ENCODE measurements at regions of chr2 and their contacts with region 1.

Region 1: DNA sequence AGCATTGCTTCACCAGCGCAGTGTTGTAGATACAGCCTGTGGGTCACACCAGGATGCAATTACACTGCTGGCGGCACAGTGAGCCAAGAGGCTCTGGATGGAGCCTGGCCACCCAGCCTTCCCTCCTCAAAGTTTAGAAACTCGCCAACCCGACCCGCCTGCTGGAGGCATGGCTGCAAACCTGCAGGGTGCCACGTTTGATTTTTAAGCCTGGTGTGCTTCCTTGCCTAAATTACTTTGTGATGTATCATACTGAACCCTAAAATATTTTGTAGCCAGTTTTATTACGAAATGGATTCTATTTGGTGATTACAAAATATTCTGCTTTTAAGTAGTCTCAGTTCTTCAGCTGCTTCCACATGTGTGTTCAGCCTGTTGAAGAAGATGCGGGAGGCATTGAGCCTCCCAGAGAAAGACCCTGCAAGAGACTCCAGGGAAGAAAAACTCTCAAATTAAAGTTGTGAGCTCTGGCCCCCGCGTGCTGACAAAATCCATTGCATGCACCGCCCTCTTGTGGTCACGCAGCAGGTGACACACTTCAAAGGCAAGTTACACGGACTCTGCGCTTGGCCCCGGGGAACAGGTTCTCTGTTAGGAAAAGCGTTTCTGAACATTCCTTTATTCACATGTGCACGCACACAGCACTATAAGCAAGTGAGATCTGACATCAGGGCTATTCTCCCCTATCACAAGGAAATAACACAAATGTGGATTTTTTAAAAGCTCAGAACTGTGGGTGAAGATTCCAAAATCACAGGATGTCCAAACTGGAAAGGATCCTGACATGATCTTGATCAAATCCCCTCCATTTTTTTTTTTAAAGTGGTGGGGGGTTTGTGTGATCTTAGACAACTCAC is 63.0 kb upstream of the TWIST2 start:
- DNase-seq: peak; percentile 79
- H3K4me3 ChIP-seq: peak overlapping the region in 1 of 2 experiments; percentile 6; a peak in 1 of 4 replicates
- H3K27ac ChIP-seq: no peak overlapping the region
- H3K4me1 ChIP-seq: no peaks in the 10 kb centered on the region
- H3K27me3 ChIP-seq: no peaks in the 10 kb centered on the region
- CTCF ChIP-seq: peak; percentile 93
- EP300 ChIP-seq: no peak
- RAD21 ChIP-seq: peak; percentile 90

Region 2: DNA sequence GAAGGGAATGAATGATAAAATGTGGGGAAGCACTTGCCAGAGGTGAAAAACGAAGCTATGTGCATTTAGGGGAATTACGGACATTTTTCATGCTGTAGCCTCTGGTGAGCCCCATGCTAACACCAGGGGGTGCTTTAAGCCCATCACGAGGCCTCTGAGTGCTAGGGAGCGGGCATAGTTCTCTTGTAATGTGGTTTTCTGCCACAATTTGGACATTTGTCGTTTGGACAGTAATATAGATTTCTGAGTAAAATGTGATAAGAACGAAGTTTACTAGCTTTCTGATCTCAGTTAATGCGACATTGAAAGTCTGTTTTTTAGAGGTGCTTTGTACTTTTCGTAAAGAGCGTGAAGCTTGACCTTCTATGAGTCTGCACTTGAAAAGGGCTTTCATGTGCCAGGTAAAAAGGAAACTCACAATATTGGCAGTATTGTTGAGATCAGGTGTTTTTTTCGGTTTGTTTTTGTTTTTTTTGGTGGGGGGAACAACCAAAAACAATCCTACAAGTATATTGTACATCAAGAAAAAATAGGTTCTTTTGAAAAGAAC is 414.0 kb before region 1 on chr2:
- CTCF ChIA-PET with region 1: interaction called, 35 read pairs
- POLR2A ChIA-PET with region 1: no interaction called
- DNase-seq: peak; percentile 73
- H3K4me3 ChIP-seq: no peak overlapping the region
- H3K27ac ChIP-seq: no peak overlapping the region
- H3K4me1 ChIP-seq: peaks cover 0 to 4% of the 10 kb centered on the region in 2 experiments; a peak in 1 of 4 replicates
- H3K27me3 ChIP-seq: no peaks in the 10 kb centered on the region
- CTCF ChIP-seq: peak; percentile 76
- EP300 ChIP-seq: no peak
- RAD21 ChIP-seq: peak; percentile 85

Region 3: DNA sequence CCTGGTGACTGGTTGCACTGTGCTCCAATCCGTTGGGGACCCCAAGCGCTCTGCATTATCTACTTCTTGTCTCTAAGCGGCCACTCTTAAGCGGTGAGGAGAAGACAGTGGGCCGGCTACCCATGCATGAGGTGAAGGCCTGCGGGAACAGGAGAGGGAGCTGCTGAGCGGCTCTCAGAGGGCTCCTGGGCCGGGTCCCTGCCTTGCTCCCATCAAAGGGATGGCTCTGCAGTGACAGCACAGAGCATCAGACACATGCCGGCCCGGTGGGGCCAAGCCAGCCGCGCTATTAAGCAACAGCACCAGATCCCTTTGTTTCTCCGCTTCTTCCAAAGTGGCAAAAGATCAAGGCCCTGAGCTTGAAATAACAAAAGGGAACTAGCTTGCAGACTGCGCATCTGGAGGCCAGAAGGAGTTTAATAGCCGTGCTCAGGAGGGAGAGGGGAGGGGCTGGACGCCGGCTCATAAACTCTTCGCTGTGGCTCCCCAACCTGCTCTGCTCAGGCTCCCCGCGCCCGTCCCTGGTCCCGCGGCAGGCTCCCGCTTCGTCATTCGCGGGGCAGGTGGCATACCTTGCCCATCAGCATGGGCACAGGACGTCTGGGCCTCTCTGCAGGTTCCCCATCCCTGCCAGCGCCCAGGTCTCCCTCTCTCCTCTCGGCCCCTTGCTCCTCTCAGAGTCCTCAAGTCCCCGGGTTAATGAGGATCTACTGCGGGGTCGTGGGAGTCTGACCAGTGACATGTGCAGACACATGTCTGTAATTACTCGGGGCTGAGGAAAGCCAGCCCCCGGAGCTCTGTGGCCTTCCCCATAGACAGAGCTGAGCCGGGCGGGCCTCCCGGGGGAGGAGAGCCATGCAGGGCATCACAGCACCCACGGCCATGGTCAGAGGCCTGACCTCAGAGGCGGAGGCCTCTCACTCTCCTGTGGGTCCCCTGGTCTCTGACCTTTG is 261.5 kb before region 1 on chr2:
- CTCF ChIA-PET with region 1: interaction called, 38 read pairs
- POLR2A ChIA-PET with region 1: no interaction called
- DNase-seq: peak; percentile 87
- H3K4me3 ChIP-seq: no peak overlapping the region
- H3K27ac ChIP-seq: peak overlapping the region in 1 of 2 experiments; percentile 31; a peak in 1 of 4 replicates
- H3K4me1 ChIP-seq: peaks cover 0 to 22% of the 10 kb centered on the region in 2 experiments; a peak in 1 of 4 replicates
- H3K27me3 ChIP-seq: no peaks in the 10 kb centered on the region
- CTCF ChIP-seq: no peak; the same call in 1 of the 2 replicates
- EP300 ChIP-seq: no peak
- RAD21 ChIP-seq: peak; percentile 67

Region 4: DNA sequence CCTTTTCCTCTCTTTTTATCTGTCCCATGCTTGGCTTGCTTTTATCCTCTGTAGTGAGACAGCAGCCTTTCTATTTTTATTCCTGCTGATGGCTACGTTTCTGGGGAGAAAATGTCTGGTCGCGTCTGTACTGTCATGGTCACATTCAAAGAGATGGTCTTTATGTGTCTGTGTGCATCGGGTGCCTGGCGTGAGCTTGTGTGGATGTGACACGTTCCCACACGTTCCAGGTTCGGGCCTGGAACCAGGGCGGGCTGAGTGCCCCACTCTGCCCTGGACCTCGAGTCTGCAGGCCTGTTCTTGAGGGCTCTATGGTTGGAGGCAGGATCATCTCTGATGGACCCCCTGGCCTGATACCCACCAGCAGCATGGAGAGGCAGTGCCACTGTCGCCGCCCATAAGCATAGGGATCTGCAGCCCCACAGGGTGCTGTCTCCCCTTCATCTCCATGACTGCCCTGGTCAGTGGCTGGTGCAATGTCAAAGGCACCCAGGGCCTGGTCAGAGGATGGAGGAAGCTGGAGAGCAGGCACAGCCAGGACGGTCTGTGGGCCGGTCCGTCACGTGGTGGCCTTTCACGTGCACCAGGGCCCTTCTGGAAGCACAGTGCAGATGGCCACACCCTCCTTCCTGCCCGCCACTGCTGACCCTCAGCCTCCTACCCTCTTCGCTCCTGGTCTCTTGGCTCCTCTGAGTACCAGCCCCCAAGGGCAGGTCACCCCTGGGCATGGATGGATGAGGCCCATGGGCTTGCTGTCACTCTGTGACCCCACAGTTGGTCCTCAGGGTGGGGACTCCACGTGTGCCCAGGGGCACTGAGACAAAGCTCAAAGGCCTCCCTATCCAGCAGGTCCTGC is 86.2 kb before region 1 on chr2:
- CTCF ChIA-PET with region 1: no interaction called
- POLR2A ChIA-PET with region 1: no interaction called
- DNase-seq: no peak
- H3K4me3 ChIP-seq: no peak overlapping the region
- H3K27ac ChIP-seq: no peak overlapping the region
- H3K4me1 ChIP-seq: no peaks in the 10 kb centered on the region
- H3K27me3 ChIP-seq: no peaks in the 10 kb centered on the region; the same call in 1 of the 2 replicates
- CTCF ChIP-seq: no peak
- EP300 ChIP-seq: no peak
- RAD21 ChIP-seq: no peak

Region 5: GRCh38 chr2:238771218-238771617 is 13.7 kb before region 1 on chr2:
- CTCF ChIA-PET with region 1: interaction called, 26 read pairs
- POLR2A ChIA-PET with region 1: no interaction called
- DNase-seq: peak; percentile 60
- H3K4me3 ChIP-seq: no peak overlapping the region; a peak in 1 of 4 replicates
- H3K27ac ChIP-seq: no peak overlapping the region
- H3K4me1 ChIP-seq: no peaks in the 10 kb centered on the region
- H3K27me3 ChIP-seq: no peaks in the 10 kb centered on the region
- CTCF ChIP-seq: peak; percentile 22; the same call in 1 of the 2 replicates
- EP300 ChIP-seq: no peak
- RAD21 ChIP-seq: no peak

Region 6: DNA sequence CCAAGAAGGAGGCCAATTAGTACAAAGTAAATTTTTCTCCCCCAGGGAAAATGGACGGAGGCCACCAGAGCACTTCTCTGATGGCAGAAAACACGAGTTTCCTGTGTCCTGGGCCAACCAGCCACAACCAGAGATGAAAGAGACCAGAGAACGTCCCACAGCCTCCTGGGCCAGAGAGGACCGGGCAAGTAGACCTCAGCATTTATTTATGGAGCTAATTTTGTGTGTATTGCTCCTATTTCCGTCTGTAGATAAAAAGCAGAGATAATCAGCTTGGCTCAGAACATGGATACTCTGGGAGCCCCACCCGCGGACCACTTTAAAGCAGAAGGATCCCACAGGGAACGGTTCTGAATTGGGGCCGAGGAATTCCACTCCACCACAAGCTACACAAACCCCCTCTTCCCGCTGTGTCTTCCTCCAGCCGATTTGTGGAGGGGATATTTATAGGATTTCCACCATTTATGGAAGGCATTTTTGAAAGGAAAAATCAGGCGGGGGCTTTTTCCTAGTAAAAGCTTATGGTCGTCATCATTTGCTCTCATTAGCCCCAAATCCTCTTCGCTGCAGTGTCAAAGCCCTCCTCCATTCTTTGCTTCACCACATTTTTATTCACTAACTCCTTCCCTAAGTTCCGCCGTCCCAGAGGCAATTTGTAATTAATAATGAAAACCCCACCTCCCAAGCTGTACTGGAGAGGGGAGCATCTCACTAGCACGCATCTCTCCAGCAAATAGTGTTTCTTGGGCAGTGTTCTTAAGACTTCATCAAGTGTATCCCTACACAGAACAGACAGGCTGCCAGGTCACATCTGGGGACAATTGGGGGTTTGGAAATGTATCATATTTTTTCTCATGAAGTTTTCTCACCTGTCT is 19.3 kb after region 1 on chr2:
- CTCF ChIA-PET with region 1: interaction called, 34 read pairs
- POLR2A ChIA-PET with region 1: no interaction called
- DNase-seq: peak; percentile 29
- H3K4me3 ChIP-seq: no peak overlapping the region
- H3K27ac ChIP-seq: no peak overlapping the region
- H3K4me1 ChIP-seq: peaks cover 0 to 8% of the 10 kb centered on the region in 2 experiments; a peak in 1 of 4 replicates
- H3K27me3 ChIP-seq: no peaks in the 10 kb centered on the region
- CTCF ChIP-seq: no peak
- EP300 ChIP-seq: no peak
- RAD21 ChIP-seq: no peak

Region 7: GRCh38 chr2:239061824-239062570 is 277.1 kb after region 1 on chr2:
- CTCF ChIA-PET with region 1: no interaction called
- POLR2A ChIA-PET with region 1: no interaction called
- DNase-seq: peak; percentile 85
- H3K4me3 ChIP-seq: no peak overlapping the region
- H3K27ac ChIP-seq: peak overlapping the region in 1 of 2 experiments; percentile 71; a peak in 2 of 4 replicates
- H3K4me1 ChIP-seq: peaks cover 0 to 42% of the 10 kb centered on the region in 2 experiments; a peak in 1 of 4 replicates
- H3K27me3 ChIP-seq: no peaks in the 10 kb centered on the region
- CTCF ChIP-seq: no peak
- EP300 ChIP-seq: peak in 1 of 2 experiments; percentile 59; a peak in 1 of 4 replicates
- RAD21 ChIP-seq: no peak

Measured in SK-N-SH (cell line).